Posterior vena cava (tissue), 2 donors: ENCODE measurements at regions of chr12 and their contacts with region 1.

Region 1: GRCh38 chr12:59858508-59859170 is 262.8 kb downstream of the SLC16A7 start:
- DNase-seq: no peak

Region 2: GRCh38 chr12:59250766-59251165 is 607.9 kb before region 1 on chr12:
- intact Hi-C with region 1: loop called in 1 of 2 experiments (anchors 10 kb)
- DNase-seq: no peak

Region 3: GRCh38 chr12:59736822-59737221 is 121.8 kb before region 1 on chr12:
- intact Hi-C with region 1: no loop called
- DNase-seq: no peak

Region 4: DNA sequence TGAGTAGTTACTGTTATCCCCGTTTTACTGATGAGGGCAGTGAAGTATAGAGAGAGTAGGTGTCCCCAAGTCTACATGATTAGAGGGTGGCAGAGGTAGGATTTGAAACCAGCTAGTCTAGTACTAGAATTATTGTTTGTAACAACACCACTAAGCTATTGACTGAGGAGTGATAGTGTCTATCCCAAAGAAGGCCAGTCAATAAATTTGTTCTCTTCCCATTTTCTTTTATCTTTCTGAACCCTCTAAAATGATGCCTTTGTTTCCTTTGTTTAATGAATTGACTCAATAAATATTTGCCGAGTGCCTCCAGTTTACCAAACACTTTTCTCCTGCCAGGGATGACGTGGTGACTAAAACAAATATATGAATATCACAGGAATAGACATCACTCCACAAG is 15.3 kb before region 1 on chr12:
- intact Hi-C with region 1: no loop called
- DNase-seq: no peak